ENCODE measurements at regions of chr7 and their contacts with region 1.

Region 1: GRCh38 chr7:106100863-106101629 is 11.1 kb downstream of the SYPL1 start:
- DNase-seq: no peak
- H3K4me3 ChIP-seq: no peak overlapping the region
- H3K27ac ChIP-seq: no peak overlapping the region
- H3K4me1 ChIP-seq: peaks cover 0 to 3% (median 0%) of the 10 kb centered on the region in 4 experiments; a peak in 1 of 7 replicates
- H3K27me3 ChIP-seq: no peaks in the 10 kb centered on the region
- CTCF ChIP-seq: no peak
- EP300 ChIP-seq: no peak
- POLR2A ChIP-seq: no peak
- RAD21 ChIP-seq: no peak

Region 2: DNA sequence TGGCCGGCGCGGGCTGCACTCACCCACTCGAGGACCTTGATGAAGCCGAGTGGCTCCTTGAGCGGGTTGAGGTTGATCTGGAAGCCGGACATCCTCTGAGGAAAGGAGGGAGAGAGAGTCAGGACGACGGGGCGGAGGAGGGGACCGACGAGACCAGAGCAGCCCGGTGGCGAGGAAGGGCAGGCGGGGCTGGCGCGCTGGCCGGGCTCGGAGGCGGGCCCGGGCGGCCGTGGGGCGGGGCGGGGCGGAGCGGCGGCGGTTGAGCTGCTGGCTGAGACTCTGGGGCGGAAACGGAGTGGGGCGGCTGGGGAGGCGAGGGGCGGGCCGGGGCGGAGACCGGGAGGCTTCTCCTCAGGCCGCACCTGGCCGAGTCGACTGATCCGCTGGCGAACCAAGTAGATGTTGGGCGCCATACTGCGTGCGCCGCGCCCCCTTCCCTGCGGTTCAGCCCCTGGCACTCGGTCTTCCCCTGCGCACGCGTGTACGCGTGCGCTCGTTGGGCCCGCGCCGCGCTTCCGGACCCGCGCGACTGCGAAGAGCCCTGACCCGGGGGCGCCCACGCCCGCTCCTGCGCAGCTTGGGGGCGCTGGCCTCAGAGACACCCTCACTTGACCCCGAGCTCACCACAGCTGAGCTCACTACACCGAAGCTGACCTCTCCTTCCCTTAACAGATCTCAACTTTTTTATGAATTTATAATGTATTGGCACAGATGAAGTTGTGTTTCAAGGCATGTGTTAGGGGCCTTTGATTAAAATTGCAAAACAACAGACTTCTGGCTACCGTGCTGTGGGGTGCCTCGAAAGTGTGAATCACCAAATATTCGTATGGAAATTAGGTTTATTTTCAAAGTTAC is 11.3 kb after region 1 on chr7 and contains the start of gene SYPL1:
- CTCF ChIA-PET with region 1: interaction called, 5 read pairs
- POLR2A ChIA-PET with region 1: interaction called, 14 read pairs
- DNase-seq: peak; percentile 65 to 93
- H3K4me3 ChIP-seq: peak within 1 kb of the TSS; percentile 78 to 80 (median 78)
- H3K27ac ChIP-seq: peak within 1 kb of the TSS; percentile 84; the same call in 1 of the 2 replicates
- H3K4me1 ChIP-seq: peaks cover 0 to 22% (median 12%) of the 10 kb centered on the region in 4 experiments; a peak in 4 of 7 replicates
- H3K27me3 ChIP-seq: no peaks in the 10 kb centered on the region
- CTCF ChIP-seq: no peak
- EP300 ChIP-seq: no peak
- POLR2A ChIP-seq: peak in 1 of 2 experiments; percentile 81; a peak in 2 of 3 replicates
- RAD21 ChIP-seq: no peak
- total RNA-seq, gene SYPL1: 56.1 and 57.7 TPM in 2 replicates

Region 3: GRCh38 chr7:106126170-106126938 is 25.3 kb after region 1 on chr7:
- CTCF ChIA-PET with region 1: no interaction called
- POLR2A ChIA-PET with region 1: no interaction called
- DNase-seq: no peak
- H3K4me3 ChIP-seq: no peak overlapping the region
- H3K27ac ChIP-seq: no peak overlapping the region
- H3K4me1 ChIP-seq: no peaks in the 10 kb centered on the region
- H3K27me3 ChIP-seq: no peaks in the 10 kb centered on the region
- CTCF ChIP-seq: no peak
- EP300 ChIP-seq: no peak
- POLR2A ChIP-seq: no peak
- RAD21 ChIP-seq: no peak

Region 4: GRCh38 chr7:106176414-106177299 is 75.6 kb after region 1 on chr7:
- CTCF ChIA-PET with region 1: no interaction called
- POLR2A ChIA-PET with region 1: no interaction called
- DNase-seq: peak; percentile 81 to 96
- H3K4me3 ChIP-seq: no peak overlapping the region
- H3K27ac ChIP-seq: no peak overlapping the region
- H3K4me1 ChIP-seq: peaks cover 0 to 5% (median 1%) of the 10 kb centered on the region in 4 experiments; a peak in 2 of 7 replicates
- H3K27me3 ChIP-seq: no peaks in the 10 kb centered on the region
- CTCF ChIP-seq: peak; percentile 91 to 99 (median 99)
- EP300 ChIP-seq: peak in 1 of 2 experiments; percentile 50; a peak in 1 of 3 replicates
- POLR2A ChIP-seq: peak in 1 of 2 experiments; percentile 49; a peak in 2 of 3 replicates
- RAD21 ChIP-seq: peak; percentile 99

Region 5: GRCh38 chr7:106225856-106226255 is 124.8 kb after region 1 on chr7:
- CTCF ChIA-PET with region 1: no interaction called
- POLR2A ChIA-PET with region 1: no interaction called
- DNase-seq: no peak
- H3K4me3 ChIP-seq: no peak overlapping the region
- H3K27ac ChIP-seq: no peak overlapping the region
- H3K4me1 ChIP-seq: no peaks in the 10 kb centered on the region
- H3K27me3 ChIP-seq: no peaks in the 10 kb centered on the region
- CTCF ChIP-seq: no peak
- EP300 ChIP-seq: no peak
- POLR2A ChIP-seq: no peak
- RAD21 ChIP-seq: no peak